ENCODE measurements at regions of chr2 and their contacts with region 1.

Region 1: GRCh38 chr2:187453078-187453641 is 5.1 kb upstream of the CALCRL start:
- DNase-seq: no peak
- H3K4me3 ChIP-seq: no peak overlapping the region
- H3K27ac ChIP-seq: no peak overlapping the region
- H3K4me1 ChIP-seq: peaks cover 0 to 2% (median 0%) of the 10 kb centered on the region in 6 donors
- H3K27me3 ChIP-seq: no peaks in the 10 kb centered on the region
- CTCF ChIP-seq: peak in 6 of 11 experiments; percentile 11 to 48 (median 26)
- POLR2A ChIP-seq: no peak

Region 2: GRCh38 chr2:186862869-186863709 is 590.1 kb before region 1 on chr2:
- intact Hi-C with region 1: loop called (anchors 5 kb)
- DNase-seq: no peak
- H3K4me3 ChIP-seq: no peak overlapping the region
- H3K27ac ChIP-seq: no peak overlapping the region
- H3K4me1 ChIP-seq: peaks cover 0 to 8% (median 0%) of the 10 kb centered on the region in 6 donors
- H3K27me3 ChIP-seq: no peaks in the 10 kb centered on the region
- CTCF ChIP-seq: peak; percentile 16 to 69 (median 60)
- POLR2A ChIP-seq: no peak

Region 3: DNA sequence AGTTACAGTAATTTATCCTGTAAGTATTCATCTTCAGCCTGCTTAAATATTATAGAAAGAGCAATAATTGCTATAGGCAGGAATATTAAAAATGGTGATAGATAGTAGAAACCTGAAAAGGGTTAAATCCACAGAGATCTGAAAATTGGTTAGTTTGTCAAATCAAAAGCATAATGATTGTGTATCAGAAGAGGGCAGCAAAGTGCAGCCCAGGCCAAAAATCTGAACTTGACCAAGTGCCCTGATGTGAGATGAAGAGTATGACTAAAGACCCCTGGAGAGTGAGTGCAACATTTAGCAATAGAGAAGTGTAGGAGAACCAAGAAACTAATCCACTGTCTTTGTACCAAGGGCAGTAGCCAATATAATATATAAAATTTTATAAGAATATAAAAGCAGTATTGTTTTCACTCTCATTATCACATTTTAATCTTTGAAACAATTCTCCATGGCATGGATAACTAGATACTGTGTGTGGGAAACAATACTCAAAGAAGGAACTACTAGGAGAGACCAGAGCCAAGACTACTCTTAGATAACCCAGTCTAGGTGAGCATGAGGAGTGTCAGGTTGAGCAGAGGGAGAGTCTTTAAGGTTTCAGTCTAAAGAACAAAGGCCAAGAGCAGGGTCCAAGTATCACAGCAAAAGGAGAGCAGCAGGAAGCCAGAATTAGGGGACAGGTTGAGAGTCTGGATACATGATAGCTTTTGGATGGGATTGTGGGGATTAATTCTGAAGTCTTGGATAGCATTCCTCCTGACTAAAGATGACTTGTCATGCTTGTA is 153.8 kb before region 1 on chr2:
- intact Hi-C with region 1: loop called (anchors 10 kb)
- DNase-seq: no peak
- H3K4me3 ChIP-seq: no peak overlapping the region
- H3K27ac ChIP-seq: no peak overlapping the region
- H3K4me1 ChIP-seq: peaks cover 0 to 4% (median 0%) of the 10 kb centered on the region in 6 donors
- H3K27me3 ChIP-seq: no peaks in the 10 kb centered on the region
- CTCF ChIP-seq: peak in 2 of 11 experiments; percentile 14 to 15
- POLR2A ChIP-seq: no peak

Region 4: DNA sequence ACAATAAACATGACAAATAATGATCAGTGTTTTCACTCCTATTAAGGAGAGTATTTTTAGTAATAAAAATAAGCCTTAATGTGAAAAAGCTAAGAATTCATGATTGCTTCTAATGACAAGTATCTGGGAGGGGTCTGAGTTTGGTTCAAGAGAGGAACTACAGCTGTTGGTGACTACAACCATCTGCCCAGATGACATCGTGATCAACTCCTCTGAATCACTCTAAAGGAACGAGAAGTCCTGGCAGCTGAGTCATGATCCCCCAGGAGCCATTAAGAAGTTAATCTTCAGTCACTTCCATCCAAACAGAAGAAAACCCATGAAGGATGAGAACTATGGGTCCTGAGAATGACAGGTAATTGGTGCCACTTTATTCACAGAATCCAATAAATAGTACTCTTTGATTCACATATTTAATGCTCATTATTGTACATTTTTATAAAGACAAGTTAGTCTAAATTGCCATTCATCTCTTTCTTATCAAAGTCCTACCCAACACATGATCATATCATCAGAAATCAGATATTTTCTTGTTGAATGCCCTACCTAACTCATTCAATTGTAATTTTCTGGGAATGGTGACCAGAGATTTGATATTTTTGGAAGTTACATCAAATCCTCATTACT is 94.3 kb after region 1 on chr2:
- intact Hi-C with region 1: no loop called
- DNase-seq: no peak
- H3K4me3 ChIP-seq: no peak overlapping the region
- H3K27ac ChIP-seq: peak overlapping the region in 1 of 8 donors; percentile 34
- H3K4me1 ChIP-seq: peaks cover 0 to 31% (median 8%) of the 10 kb centered on the region in 6 donors
- H3K27me3 ChIP-seq: no peaks in the 10 kb centered on the region
- CTCF ChIP-seq: no peak
- POLR2A ChIP-seq: no peak

Region 5: DNA sequence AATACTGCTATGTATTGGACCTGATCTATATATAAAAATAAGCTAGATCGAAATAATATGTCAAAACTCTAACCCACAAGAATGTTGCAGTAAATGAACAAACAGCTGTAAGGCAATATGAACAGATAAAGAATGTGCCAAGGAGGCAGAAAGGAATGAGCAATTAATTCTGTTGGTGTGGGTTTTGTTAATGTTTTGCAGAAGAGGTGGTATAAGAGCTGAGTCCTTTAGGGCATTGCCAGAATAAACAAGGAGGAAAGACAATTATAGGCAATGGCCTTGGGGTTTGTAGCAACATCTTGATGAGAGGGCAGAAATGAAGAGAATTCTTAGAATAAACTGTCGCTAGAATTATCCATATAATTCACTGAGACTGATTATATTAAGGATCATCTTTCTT is 597.6 kb after region 1 on chr2:
- intact Hi-C with region 1: no loop called
- DNase-seq: no peak
- H3K4me3 ChIP-seq: no peak overlapping the region
- H3K27ac ChIP-seq: no peak overlapping the region
- H3K4me1 ChIP-seq: no peaks in the 10 kb centered on the region
- H3K27me3 ChIP-seq: no peaks in the 10 kb centered on the region
- CTCF ChIP-seq: no peak
- POLR2A ChIP-seq: no peak

Measured in spleen (tissue), 13 donors.